ENCODE measurements at regions of chr20 and their contacts with region 1.

Region 1: GRCh38 chr20:34955232-34956040 is at the starts of genes GSS and MYH7B:
- DNase-seq: peak; percentile 97 to 99 (median 99)
- H3K4me3 ChIP-seq: peak within 1 kb of the TSS; percentile 79
- H3K27ac ChIP-seq: peak within 1 kb of the TSS; percentile 59 to 86
- H3K4me1 ChIP-seq: no peaks in the 10 kb centered on the region
- H3K27me3 ChIP-seq: no peaks in the 10 kb centered on the region
- CTCF ChIP-seq: peak in 2 of 3 donors; percentile 61 to 71
- EP300 ChIP-seq: no peak
- POLR2A ChIP-seq: peak; percentile 64
- total RNA-seq, gene GSS: 14.5 to 35.3 (median 22.2) TPM
- total RNA-seq, gene MYH7B: 0.74 to 2.6 (median 1.1) TPM

Region 2: GRCh38 chr20:34876162-34877001 is 79.1 kb before region 1 on chr20 and contains the start of gene ACSS2:
- intact Hi-C with region 1: loop called (anchors 2 to 5 kb)
- DNase-seq: peak; percentile 98 to 99 (median 99)
- H3K4me3 ChIP-seq: peak within 1 kb of the TSS; percentile 84
- H3K27ac ChIP-seq: peak within 1 kb of the TSS; percentile 26 to 67
- H3K4me1 ChIP-seq: peaks cover 9% of the 10 kb centered on the region
- H3K27me3 ChIP-seq: no peaks in the 10 kb centered on the region
- CTCF ChIP-seq: no peak
- EP300 ChIP-seq: no peak
- POLR2A ChIP-seq: no peak
- total RNA-seq, gene ACSS2: 26.8 to 42.6 (median 39.1) TPM

Region 3: DNA sequence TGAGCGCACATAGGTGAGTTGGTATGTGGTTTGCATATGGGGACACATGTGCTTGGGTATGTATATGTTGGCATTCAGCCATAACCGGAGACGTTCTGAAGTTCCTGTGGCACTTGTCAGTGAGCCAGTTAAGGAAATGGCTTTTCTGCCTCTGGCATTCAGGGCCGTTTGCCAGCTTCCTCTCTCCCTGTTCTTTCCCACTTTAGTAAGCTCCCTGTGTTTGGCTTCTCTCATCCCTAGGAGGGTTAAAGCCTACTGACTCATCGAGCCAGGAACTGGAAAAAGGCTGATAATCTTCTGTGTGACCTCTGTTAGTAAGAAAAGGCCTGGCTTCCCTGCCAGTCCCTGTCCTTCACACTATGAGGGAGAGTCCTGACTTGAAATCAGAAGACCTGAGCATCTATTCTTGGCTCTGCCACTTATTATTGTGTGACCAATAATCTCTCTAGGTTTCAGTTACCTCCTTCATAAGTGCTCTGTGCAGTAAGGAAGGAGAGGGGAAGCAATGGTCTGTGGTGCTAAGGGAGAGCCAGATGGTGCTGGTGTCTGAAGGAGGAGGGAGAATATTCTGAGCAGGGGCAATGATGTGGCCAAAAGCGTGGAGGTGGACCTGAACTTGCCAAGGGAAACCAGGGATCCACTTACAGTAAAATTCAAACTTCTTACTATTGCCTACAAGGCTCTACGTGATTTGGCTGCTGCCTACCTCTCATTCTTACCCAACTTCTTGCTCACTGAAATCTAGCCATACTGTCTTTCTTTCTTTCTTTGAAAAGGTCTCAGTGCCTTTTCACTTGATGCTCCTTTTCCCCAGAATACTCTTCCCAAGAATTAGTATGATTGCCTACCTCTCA is 47.6 kb before region 1 on chr20:
- intact Hi-C with region 1: no loop called
- DNase-seq: peak; percentile 39 to 72 (median 54)
- H3K4me3 ChIP-seq: no peak overlapping the region
- H3K27ac ChIP-seq: peak overlapping the region; percentile 8 to 37
- H3K4me1 ChIP-seq: peaks cover 8% of the 10 kb centered on the region
- H3K27me3 ChIP-seq: no peaks in the 10 kb centered on the region
- CTCF ChIP-seq: no peak
- EP300 ChIP-seq: no peak
- POLR2A ChIP-seq: no peak

Measured in ovary (tissue), 10 donors.